ENCODE measurements at regions of chr15 and their contacts with region 1.

Region 1: DNA sequence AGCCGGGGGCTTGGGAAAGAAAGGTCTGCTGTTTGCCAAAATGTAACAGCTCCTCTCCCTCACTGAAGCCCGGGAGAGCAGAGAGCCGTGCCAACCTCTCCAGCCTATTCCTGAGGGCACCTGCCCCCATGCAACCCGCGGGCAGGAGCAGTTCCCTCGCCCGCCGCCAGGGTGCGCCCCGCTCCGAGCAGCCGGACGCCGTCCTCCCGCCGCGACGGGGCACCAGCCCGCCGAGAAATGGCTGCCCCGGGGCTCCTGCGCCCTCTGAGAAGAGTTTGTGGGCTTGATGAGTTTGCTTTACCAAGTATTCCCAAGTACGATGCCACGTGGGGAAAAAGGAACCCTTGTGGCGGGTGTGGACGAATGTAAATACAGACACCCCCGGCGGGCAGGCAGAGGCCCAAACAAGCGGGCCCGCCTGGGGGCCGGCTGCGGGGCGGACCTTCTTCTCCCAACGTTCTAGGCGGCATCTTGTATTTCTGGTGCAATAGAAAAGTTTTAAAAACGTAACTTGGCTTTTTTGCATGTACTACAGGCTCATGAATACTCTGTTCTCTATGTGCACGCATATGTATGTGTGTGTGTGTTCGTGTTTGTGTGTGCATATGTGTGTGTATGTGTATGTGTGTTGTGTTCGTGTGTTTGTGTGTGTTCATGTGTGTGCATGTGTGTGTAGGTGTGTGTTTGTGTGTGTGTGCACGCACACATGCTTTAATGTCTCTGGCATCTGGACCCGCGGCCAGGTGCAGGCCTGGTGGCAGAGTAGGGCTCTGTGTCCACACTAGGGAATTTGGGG is 162.9 kb downstream of the CHSY1 start:
- DNase-seq: peak; percentile 75
- ATAC-seq: peak; percentile 76 to 81

Region 2: GRCh38 chr15:101014921-101015841 is 73.8 kb before region 1 on chr15:
- intact Hi-C with region 1: loop called in 1 of 2 experiments (anchors 10 kb)
- DNase-seq: peak; percentile 83
- ATAC-seq: peak; percentile 75 to 76

Region 3: DNA sequence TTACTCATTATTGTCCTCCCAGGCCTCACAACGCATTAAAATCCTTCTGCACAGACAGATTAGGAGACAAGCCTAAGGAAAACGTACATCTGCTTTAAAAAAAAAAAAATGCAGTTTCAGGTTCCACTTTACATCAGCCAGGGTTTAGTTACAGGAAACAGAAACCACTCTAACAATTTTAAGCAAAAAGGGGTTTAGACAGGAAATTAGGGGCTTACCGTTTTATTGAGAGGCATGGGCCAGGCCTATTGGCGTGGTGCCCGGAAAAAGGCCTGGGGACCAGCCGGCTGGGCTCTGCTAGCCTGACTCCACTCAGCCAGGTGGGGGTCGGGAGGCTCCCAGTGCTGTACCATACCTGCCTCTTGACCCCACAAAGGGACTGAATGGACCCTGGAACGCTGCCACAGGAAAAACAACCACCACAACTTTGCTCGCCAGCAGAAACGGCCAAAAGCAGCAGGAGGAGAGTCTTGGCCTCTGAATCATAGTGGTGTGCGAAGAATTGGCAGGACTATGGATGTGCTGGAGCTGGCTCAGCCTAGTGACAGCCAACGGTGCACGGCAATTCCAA is 38.6 kb after region 1 on chr15:
- intact Hi-C with region 1: no loop called
- DNase-seq: peak; percentile 89
- ATAC-seq: peak; percentile 94 to 95

Measured in left cardiac atrium (tissue), 4 donors.